ENCODE measurements at regions of chr1 and their contacts with region 1.

Region 1: GRCh38 chr1:44523593-44524591 is 118.8 kb downstream of the RNF220 start:
- DNase-seq: peak; percentile 76
- ATAC-seq: peak; percentile 95
- H3K4me3 Mint-ChIP-seq: no peak overlapping the region
- H3K27ac Mint-ChIP-seq: peak overlapping the region; percentile 86
- H3K4me1 Mint-ChIP-seq: peaks cover 26% of the 10 kb centered on the region
- H3K27me3 Mint-ChIP-seq: no peaks in the 10 kb centered on the region
- CTCF ChIP-seq: no peak

Region 2: GRCh38 chr1:44485229-44485933 is 38.5 kb before region 1 on chr1:
- CTCF ChIA-PET with region 1: interaction called, 9 read pairs
- POLR2A ChIA-PET with region 1: interaction called, 14 read pairs
- DNase-seq: no peak
- ATAC-seq: no peak
- H3K4me3 Mint-ChIP-seq: no peak overlapping the region
- H3K27ac Mint-ChIP-seq: peak overlapping the region; percentile 77
- H3K4me1 Mint-ChIP-seq: peaks cover 26% of the 10 kb centered on the region
- H3K27me3 Mint-ChIP-seq: no peaks in the 10 kb centered on the region
- CTCF ChIP-seq: no peak

Region 3: GRCh38 chr1:44536357-44537209 is 12.7 kb after region 1 on chr1:
- CTCF ChIA-PET with region 1: interaction called, 69 read pairs
- POLR2A ChIA-PET with region 1: interaction called, 16 read pairs
- DNase-seq: no peak
- ATAC-seq: peak; percentile 23
- H3K4me3 Mint-ChIP-seq: peak overlapping the region; percentile 29; the same call in 1 of the 2 replicates
- H3K27ac Mint-ChIP-seq: peak overlapping the region; percentile 84
- H3K4me1 Mint-ChIP-seq: peaks cover 78% of the 10 kb centered on the region
- H3K27me3 Mint-ChIP-seq: peaks cover 7% of the 10 kb centered on the region
- CTCF ChIP-seq: no peak

Measured in WTC11 (cell line).